ENCODE measurements at regions of chr16 and their contacts with region 1.

Region 1: DNA sequence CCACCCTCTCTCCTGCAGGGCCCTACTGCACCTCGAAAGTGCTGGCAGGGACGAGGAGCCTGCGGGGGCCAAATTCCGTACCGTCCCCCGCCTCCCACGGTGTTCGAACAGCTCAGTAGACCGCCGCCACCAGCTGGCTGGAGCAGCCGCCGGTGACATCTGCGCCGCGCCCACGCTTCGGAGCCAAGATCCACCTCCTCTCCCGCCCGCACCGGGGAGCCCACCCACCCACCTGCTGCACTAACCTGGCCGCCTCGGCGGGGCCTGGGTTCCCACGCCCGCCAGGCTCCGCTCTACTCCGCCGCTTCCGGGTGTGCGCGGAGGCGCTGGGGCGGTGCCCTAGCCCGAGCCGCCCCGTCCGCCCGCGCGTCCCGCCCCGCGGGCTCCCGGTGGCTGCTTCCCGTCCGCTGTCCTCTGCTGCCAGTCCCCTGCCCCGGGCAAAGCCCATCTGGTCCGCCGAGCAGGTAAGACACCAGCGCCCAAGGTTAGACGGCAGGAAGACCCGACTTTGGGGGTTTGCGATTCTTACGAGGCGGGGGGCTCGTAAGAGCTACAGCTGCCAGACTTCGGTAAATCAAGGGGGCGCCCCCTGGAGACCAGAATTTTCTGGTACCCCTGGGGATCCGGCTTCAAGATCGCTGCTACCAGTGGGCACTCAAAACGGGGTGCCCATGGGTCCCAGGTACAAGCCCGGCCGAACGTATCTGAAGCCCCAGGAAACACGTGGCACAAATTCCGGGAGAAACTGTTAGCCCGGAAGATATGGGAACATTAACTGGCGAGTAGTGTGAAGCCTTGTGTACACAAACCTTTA is at the starts of genes FBXL8 and TRADD:
- DNase-seq: peak; percentile 67 to 76
- ATAC-seq: peak; percentile 83 to 89
- H3K4me3 ChIP-seq: peak within 1 kb of the TSS; percentile 94
- H3K27ac ChIP-seq: peak within 1 kb of the TSS; percentile 86 to 90
- H3K4me1 ChIP-seq: peaks cover 21% of the 10 kb centered on the region
- CTCF ChIP-seq: peak; percentile 70
- EP300 ChIP-seq: no peak
- POLR2A ChIP-seq: peak; percentile 64
- RAD21 ChIP-seq: no peak; a peak in 1 of 5 replicates
- polyA plus RNA-seq, gene FBXL8: 5.4 and 5.6 TPM in 2 replicates
- polyA plus RNA-seq, gene TRADD: 7.8 and 9.1 TPM in 2 replicates

Region 2: DNA sequence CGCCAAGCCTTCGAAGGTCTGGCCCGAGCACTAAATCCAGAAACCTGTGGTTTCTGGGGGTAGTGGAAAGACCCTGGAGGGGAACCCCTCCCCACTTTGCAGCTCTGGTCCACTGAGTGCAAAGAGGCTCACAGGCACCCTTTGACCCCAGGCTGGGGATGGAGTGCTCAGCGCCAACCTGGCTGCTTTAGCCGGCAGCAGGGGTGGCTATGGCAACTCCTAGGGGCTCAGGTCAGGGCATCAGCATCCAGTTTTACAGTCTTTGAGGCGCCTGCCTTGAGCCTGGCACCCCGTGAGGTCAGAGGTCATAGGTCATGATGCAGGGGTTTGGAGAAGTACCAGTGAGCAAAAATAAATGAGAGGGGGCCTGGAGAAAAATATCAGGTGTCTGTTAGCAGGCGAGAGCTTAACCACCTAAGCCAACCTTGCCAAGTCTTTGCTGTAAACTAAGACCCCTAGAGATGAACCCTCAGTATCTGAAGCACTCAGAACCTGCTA is 297.7 kb before region 1 on chr16:
- CTCF ChIA-PET with region 1: no interaction called
- POLR2A ChIA-PET with region 1: no interaction called
- DNase-seq: no peak
- ATAC-seq: no peak
- H3K4me3 ChIP-seq: no peak overlapping the region
- H3K27ac ChIP-seq: no peak overlapping the region
- H3K4me1 ChIP-seq: peaks cover 9% of the 10 kb centered on the region; the same call in 1 of the 3 replicates
- CTCF ChIP-seq: no peak
- EP300 ChIP-seq: no peak
- POLR2A ChIP-seq: no peak
- RAD21 ChIP-seq: no peak

Region 3: DNA sequence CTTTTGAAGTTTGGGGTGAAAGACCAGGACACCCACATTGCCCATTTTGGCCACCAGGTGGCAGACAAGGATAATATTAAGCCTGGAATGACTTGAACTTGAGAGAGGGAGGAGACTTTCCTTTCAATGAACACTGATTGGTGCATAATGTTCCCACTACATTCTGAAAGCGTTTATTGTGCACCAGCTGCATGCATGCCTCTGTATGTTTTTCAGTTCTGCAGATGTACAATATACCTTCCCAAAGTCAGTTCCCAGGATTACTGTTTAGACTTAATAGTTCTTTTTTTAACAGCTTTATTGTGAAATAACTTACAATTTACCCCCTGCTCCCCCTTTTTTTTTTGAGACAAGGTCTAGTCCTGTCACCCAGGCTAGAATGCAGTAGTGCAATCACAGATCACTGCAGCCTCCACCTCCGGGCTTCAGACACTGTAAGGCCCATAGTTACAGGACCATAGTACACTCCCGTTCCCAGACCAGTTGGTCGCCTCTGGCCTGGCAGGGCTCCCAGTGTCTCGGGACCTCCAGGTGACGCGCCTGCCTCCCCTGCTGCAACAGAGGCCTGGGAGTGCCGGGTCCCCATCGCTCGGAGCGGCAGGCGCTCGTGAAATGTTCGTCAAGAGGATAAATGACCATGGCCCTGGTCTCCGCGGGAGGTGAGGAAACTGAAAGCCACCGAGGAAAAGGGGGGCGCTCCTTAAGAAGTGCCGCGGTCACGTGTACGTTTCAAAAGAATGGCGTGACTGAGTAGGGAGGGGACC is 212.3 kb before region 1 on chr16:
- CTCF ChIA-PET with region 1: interaction called, 23 read pairs
- POLR2A ChIA-PET with region 1: no interaction called
- DNase-seq: peak; percentile 83 to 94
- ATAC-seq: peak; percentile 82 to 93
- H3K4me3 ChIP-seq: peak overlapping the region; percentile 22; the same call in 2 of the 3 replicates
- H3K27ac ChIP-seq: 0 out of 6 replicates have a peak overlapping the region, but pooled peaks of 1 of the 2 experiments have one; percentile 21
- H3K4me1 ChIP-seq: 0 out of 3 replicates have a peak, but pooled peaks cover 4% of the 10 kb centered on the region
- CTCF ChIP-seq: peak; percentile 81
- EP300 ChIP-seq: no peak
- POLR2A ChIP-seq: no peak
- RAD21 ChIP-seq: peak; percentile 68 to 79

Region 4: GRCh38 chr16:66977341-66978113 is 182.3 kb before region 1 on chr16:
- CTCF ChIA-PET with region 1: interaction called, 190 read pairs
- POLR2A ChIA-PET with region 1: no interaction called
- DNase-seq: peak; percentile 87 to 91
- ATAC-seq: peak; percentile 98 to 99
- H3K4me3 ChIP-seq: no peak overlapping the region
- H3K27ac ChIP-seq: peak overlapping the region; percentile 16 to 53; a peak in 2 of 6 replicates
- H3K4me1 ChIP-seq: peaks cover 3% of the 10 kb centered on the region; the same call in 1 of the 3 replicates
- CTCF ChIP-seq: peak; percentile 94
- EP300 ChIP-seq: no peak
- POLR2A ChIP-seq: no peak
- RAD21 ChIP-seq: peak; percentile 98

Region 5: GRCh38 chr16:67000384-67001351 is 159.1 kb before region 1 on chr16:
- CTCF ChIA-PET with region 1: interaction called, 25 read pairs
- POLR2A ChIA-PET with region 1: no interaction called
- DNase-seq: peak in 1 of 2 experiments; percentile 58
- ATAC-seq: peak; percentile 66 to 81
- H3K4me3 ChIP-seq: peak overlapping the region; percentile 66
- H3K27ac ChIP-seq: peak overlapping the region; percentile 79 to 82; a peak in 5 of 6 replicates
- H3K4me1 ChIP-seq: peaks cover 24% of the 10 kb centered on the region
- CTCF ChIP-seq: no peak
- EP300 ChIP-seq: no peak
- POLR2A ChIP-seq: peak; percentile 32
- RAD21 ChIP-seq: no peak

Region 6: GRCh38 chr16:67028555-67029248 is 131.1 kb before region 1 on chr16 and contains the start of gene CBFB:
- CTCF ChIA-PET with region 1: interaction called, 94 read pairs
- POLR2A ChIA-PET with region 1: no interaction called
- DNase-seq: peak; percentile 95 to 97
- ATAC-seq: peak; percentile 93 to 94
- H3K4me3 ChIP-seq: peak within 1 kb of the TSS; percentile 95
- H3K27ac ChIP-seq: peak within 1 kb of the TSS; percentile 72 to 93
- H3K4me1 ChIP-seq: peaks cover 12% of the 10 kb centered on the region
- CTCF ChIP-seq: no peak
- EP300 ChIP-seq: no peak
- POLR2A ChIP-seq: peak; percentile 96
- RAD21 ChIP-seq: no peak; a peak in 1 of 5 replicates
- polyA plus RNA-seq, gene CBFB: 35.9 and 61.3 TPM in 2 replicates

Region 7: GRCh38 chr16:67093098-67093726 is 66.6 kb before region 1 on chr16:
- CTCF ChIA-PET with region 1: interaction called, 16 read pairs
- POLR2A ChIA-PET with region 1: no interaction called
- DNase-seq: no peak
- ATAC-seq: no peak
- H3K4me3 ChIP-seq: no peak overlapping the region
- H3K27ac ChIP-seq: no peak overlapping the region
- H3K4me1 ChIP-seq: no peaks in the 10 kb centered on the region
- CTCF ChIP-seq: no peak
- EP300 ChIP-seq: no peak
- POLR2A ChIP-seq: no peak
- RAD21 ChIP-seq: no peak

Region 8: GRCh38 chr16:67129422-67129821 is 30.4 kb before region 1 on chr16:
- CTCF ChIA-PET with region 1: interaction called, 193 read pairs
- POLR2A ChIA-PET with region 1: no interaction called
- DNase-seq: no peak
- ATAC-seq: no peak; a peak in 1 of 6 replicates
- H3K4me3 ChIP-seq: no peak overlapping the region
- H3K27ac ChIP-seq: no peak overlapping the region
- H3K4me1 ChIP-seq: no peaks in the 10 kb centered on the region
- CTCF ChIP-seq: no peak
- EP300 ChIP-seq: no peak
- POLR2A ChIP-seq: no peak
- RAD21 ChIP-seq: no peak